ENCODE measurements at regions of chr1 and their contacts with region 1.

Region 1: DNA sequence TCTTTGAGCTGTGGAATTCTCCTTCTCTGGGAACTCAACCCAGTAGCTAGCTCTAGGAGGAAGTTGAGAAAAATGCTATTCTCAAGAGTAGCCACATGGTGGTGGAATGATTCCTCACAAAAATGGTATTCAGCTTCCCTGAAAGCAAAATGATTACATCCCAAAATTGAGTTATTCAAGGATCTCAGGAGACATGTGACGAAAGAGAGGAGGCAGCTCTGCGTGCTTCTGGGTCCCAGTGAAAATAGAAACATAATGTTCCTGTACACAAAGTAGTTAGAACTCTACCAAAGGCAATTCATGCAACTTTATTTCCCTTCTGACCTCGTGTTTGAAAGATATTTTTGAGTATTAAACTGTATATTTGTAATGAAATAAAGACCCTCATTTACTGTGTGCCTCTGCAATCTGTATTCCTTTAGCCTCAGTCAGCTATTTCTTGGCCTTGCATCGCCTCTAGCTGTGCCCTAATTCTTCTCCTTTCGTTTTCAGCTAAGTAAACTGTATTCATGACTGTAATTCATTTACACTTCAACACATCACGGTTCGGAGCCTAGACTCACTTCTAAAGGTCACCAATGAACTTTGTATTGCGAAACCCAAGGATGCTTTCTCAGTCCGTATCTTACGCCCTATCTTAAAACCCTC is 167.3 kb downstream of the FASLG start:
- DNase-seq: peak; percentile 44 to 75
- ATAC-seq: peak; percentile 89 to 94
- H3K4me3 ChIP-seq: no peak overlapping the region
- H3K27ac ChIP-seq: peak overlapping the region; percentile 68 to 74
- H3K4me1 ChIP-seq: peaks cover 16% of the 10 kb centered on the region
- CTCF ChIP-seq: peak; percentile 85
- EP300 ChIP-seq: no peak
- POLR2A ChIP-seq: no peak
- RAD21 ChIP-seq: peak; percentile 97

Region 2: DNA sequence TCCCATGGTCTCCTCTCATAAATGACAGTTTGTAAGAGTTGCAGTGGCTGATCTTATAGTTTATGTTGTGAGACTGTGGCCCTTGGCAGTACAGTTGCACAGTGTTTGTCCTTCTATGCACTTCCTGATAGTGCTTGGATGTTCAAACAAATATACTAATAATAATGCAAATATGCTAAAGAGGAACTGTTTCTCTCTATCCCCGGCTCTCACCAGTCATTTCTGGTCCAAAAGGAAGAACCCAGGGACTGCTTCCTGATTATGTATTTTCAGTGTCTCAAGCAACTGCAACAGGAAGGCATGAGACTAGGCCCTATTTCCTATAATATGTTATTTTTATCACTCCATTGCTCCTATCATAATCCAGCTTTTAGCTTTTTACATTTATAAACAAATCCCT is 310.3 kb before region 1 on chr1:
- CTCF ChIA-PET with region 1: no interaction called
- POLR2A ChIA-PET with region 1: no interaction called
- DNase-seq: no peak
- ATAC-seq: no peak
- H3K4me3 ChIP-seq: no peak overlapping the region
- H3K27ac ChIP-seq: no peak overlapping the region
- H3K4me1 ChIP-seq: no peaks in the 10 kb centered on the region
- CTCF ChIP-seq: no peak
- EP300 ChIP-seq: no peak
- POLR2A ChIP-seq: no peak
- RAD21 ChIP-seq: no peak

Region 3: GRCh38 chr1:172837816-172838680 is 11.8 kb after region 1 on chr1:
- CTCF ChIA-PET with region 1: interaction called, 12 read pairs
- POLR2A ChIA-PET with region 1: no interaction called
- DNase-seq: no peak
- ATAC-seq: no peak
- H3K4me3 ChIP-seq: no peak overlapping the region
- H3K27ac ChIP-seq: no peak overlapping the region
- H3K4me1 ChIP-seq: peaks cover 6% of the 10 kb centered on the region; the same call in 2 of the 3 replicates
- CTCF ChIP-seq: no peak
- EP300 ChIP-seq: no peak
- POLR2A ChIP-seq: no peak
- RAD21 ChIP-seq: no peak

Region 4: GRCh38 chr1:172959571-172959970 is 133.4 kb after region 1 on chr1:
- CTCF ChIA-PET with region 1: no interaction called
- POLR2A ChIA-PET with region 1: no interaction called
- DNase-seq: no peak
- ATAC-seq: no peak
- H3K4me3 ChIP-seq: no peak overlapping the region
- H3K27ac ChIP-seq: peak overlapping the region in 1 of 2 experiments; percentile 45; a peak in 1 of 6 replicates
- H3K4me1 ChIP-seq: peaks cover 15% of the 10 kb centered on the region
- CTCF ChIP-seq: no peak
- EP300 ChIP-seq: no peak
- POLR2A ChIP-seq: no peak
- RAD21 ChIP-seq: no peak